MCF 10A (cell line): ENCODE measurements at regions of chr17 and their contacts with region 1.

Region 1: DNA sequence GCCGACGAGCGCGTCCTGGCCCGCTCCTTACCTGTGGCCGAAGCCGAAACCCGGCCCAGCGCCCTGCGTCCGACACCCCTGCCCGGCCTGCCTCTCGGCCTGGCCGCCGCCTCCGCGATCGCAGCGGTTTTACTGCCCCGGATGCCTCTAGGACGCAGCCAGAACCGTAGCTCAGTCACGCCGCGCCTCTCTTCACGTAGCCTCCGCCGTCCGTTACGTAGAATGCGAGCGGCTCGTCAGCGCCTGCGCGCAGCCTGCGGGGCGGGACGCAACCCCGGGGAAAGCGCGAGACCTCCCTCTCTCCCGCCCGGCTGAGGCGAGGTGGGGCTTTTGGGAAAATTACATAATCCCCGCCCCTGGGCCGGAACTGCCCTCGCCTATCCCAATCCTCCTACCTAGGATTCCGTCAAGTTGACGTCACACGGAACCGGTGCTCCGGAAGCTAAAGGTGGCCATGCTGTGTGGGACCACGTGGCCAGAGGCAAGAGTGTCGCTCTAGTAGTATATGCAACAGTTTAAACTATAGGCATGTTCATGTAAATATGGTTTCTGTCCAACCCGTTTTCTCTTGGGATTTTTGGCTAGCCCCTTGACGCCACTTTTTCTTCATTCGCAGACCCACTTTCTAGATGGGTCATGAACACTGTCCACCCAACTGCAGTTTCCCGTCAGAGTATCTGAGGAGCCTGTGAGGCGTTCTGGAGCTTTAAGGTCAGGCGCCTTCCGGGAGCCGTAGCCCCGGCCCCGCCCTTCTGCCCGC is at the start of gene CCDC47:
- DNase-seq: peak; percentile 99
- H3K4me3 Mint-ChIP-seq: peak within 1 kb of the TSS; percentile 76
- H3K27ac Mint-ChIP-seq: peak within 1 kb of the TSS; percentile 100
- H3K4me1 Mint-ChIP-seq: peaks cover 30% of the 10 kb centered on the region
- H3K27me3 Mint-ChIP-seq: no peaks in the 10 kb centered on the region
- CTCF ChIP-seq: no peak
- total RNA-seq, gene CCDC47: 86.4 and 114 TPM in 2 replicates

Region 2: DNA sequence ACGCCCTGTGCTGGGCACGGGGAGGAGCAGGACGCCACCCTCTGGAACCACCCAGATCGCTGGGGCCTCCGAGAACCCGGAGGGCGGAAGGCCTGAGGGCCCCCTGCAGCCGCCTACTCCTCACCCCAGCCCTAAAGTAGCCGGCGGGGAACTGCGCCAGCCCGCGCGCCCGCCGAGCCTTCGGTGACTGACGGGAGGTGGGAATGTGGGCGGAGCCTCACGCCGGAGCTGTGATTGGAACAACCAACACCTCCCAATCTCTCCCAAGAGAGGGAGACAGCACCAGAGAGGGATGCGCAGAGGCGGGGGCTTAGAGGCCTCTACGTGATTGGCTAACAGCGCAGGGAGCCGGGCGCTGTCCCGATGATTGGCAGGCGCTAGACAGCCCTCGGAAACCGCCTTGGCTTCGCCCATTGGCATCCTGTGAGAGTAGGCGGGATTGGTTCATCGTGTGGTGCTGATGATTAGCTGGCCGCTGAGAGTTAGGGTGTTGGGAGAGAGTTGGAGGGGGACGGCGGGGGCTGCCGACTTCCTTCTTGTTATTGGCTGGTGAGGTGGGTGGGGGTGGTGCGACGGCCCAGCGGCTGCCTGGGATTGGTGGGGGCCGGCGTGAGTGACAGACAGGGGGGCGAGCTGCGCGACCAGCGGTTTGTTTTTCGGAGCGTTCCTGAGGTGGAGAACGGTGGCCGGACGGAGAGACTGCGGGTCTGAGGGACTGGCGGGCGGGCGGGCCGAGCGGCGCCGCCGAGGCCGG is 151.6 kb before region 1 on chr17 and contains the start of gene MAP3K3:
- CTCF ChIA-PET with region 1: no interaction called
- POLR2A ChIA-PET with region 1: interaction called, 12 read pairs
- intact Hi-C with region 1: no loop called
- DNase-seq: peak; percentile 100
- H3K4me3 Mint-ChIP-seq: peak within 1 kb of the TSS; percentile 93
- H3K27ac Mint-ChIP-seq: no peak within 1 kb of the TSS
- H3K4me1 Mint-ChIP-seq: peaks cover 20% of the 10 kb centered on the region
- H3K27me3 Mint-ChIP-seq: no peaks in the 10 kb centered on the region
- CTCF ChIP-seq: no peak
- total RNA-seq, gene MAP3K3: 12.8 and 13.8 TPM in 2 replicates

Region 3: DNA sequence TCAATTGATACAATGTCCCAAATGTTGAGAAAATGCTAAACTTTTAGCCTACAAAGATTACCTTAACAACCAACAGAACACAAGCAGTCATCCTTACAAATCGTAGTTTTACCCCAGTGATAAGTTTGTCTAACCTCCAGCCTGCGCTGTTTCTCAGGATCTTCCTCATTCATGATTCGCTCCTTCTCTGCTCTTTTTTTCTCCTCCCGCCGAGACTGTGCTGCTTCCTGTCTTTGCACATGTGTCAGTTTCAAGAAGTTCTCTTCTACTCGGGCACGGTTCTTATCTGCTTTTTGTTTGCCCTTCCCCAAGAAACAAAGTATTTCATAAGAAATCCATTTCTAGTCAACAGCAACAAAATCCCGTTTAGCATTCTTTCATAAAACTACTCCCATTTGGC is 21.8 kb before region 1 on chr17:
- CTCF ChIA-PET with region 1: interaction called, 3 read pairs
- POLR2A ChIA-PET with region 1: interaction called, 11 read pairs
- intact Hi-C with region 1: no loop called
- DNase-seq: no peak
- H3K4me3 Mint-ChIP-seq: no peak overlapping the region
- H3K27ac Mint-ChIP-seq: no peak overlapping the region
- H3K4me1 Mint-ChIP-seq: no peaks in the 10 kb centered on the region
- H3K27me3 Mint-ChIP-seq: no peaks in the 10 kb centered on the region
- CTCF ChIP-seq: no peak

Region 4: GRCh38 chr17:63785556-63785955 is 12.0 kb after region 1 on chr17:
- CTCF ChIA-PET with region 1: interaction called, 4 read pairs
- POLR2A ChIA-PET with region 1: interaction called, 211 read pairs
- intact Hi-C with region 1: no loop called
- DNase-seq: peak; percentile 42
- H3K4me3 Mint-ChIP-seq: no peak overlapping the region
- H3K27ac Mint-ChIP-seq: peak overlapping the region; percentile 42
- H3K4me1 Mint-ChIP-seq: peaks cover 31% of the 10 kb centered on the region
- H3K27me3 Mint-ChIP-seq: no peaks in the 10 kb centered on the region
- CTCF ChIP-seq: no peak

Region 5: DNA sequence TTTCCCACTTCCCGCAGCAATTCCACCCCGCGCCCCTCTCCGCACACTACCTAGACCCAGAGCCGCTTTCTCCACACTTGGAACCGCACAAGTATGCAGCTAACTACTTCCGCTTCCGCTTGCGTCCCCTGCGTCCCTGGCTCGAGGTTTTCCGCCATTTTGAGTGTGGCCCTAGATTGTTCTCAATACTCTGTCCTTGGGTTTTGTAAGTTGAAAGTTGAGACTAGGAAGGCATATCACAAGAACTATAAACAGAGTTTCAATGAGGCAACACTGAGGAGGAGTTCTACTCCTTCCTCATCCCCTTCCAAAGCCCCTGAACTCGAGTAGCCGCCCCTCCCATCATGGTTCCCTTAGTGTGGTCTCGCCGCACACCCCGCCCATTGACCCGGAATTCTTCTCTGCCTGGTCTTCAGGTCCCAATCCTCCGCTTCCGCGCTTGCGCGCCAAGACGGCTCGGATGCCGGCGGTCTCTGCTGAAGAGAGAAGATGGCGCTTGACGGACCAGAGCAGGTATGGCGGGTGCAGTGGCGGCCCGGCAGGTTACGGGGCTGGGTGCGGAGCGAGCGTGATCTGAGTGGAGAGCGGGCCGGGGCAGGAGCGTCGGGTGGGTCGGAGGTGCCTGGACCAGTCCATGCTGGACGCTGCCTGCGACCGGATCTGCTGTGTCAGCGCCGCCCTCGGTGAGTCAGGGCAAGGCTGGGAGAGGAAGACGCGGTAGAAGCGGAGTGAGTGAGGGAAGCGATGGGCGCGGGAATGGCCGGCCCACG is 53.6 kb after region 1 on chr17 and contains the starts of genes FTSJ3 and PSMC5:
- CTCF ChIA-PET with region 1: interaction called, 8 read pairs
- POLR2A ChIA-PET with region 1: interaction called, 68 read pairs
- intact Hi-C with region 1: loop called (anchors 2 kb)
- DNase-seq: peak; percentile 96
- H3K4me3 Mint-ChIP-seq: peak within 1 kb of the TSS; percentile 100
- H3K27ac Mint-ChIP-seq: peak within 1 kb of the TSS; percentile 100
- H3K4me1 Mint-ChIP-seq: peaks cover 27% of the 10 kb centered on the region
- H3K27me3 Mint-ChIP-seq: no peaks in the 10 kb centered on the region
- CTCF ChIP-seq: peak; percentile 26
- total RNA-seq, gene FTSJ3: 36.7 and 49.5 TPM in 2 replicates
- total RNA-seq, gene PSMC5: 148 and 151 TPM in 2 replicates